Endothelial cell of umbilical vein (primary cell): ENCODE measurements at regions of chr7 and their contacts with region 1.

Region 1: DNA sequence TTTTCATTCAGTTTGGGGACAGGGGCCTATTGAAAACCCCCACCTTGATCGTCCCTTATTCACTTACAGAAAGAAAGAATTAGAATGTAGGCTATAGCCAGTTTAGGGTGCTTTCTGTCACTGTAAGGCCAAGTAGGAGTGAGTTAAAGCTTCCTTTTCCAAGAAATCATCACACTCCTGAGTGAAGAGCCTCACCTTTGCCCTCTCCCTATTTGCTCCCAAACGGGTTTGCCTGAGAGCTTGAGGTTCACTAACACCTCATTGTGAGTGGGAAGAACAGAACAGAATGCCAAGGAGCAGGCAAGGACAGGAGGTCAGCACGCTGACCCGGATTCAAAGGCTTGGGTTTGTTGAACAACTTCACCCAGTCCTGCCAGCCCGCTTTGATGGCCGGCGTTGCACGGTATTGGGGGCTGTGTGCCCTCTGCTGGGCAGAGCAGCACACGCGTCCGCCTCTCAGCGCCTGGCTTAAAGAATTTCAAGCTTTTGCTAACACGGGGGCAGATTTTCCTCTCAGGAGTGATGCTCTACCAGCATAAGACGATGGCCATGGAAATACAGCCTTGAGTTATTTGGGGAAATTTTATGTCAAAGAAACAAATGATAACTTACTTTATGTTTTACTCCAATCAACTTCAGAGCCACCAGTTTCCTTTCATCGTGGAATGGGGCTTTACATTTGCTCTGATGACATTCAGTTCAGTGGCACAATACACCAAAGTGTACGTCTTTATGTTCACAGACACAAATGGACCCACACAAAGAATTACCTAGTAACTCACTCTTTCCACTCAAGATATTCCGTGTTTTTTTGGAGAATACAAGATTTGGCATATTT is 470.0 kb downstream of the SUGCT start:
- DNase-seq: peak; percentile 65
- H3K4me3 ChIP-seq: no peak overlapping the region
- H3K27ac ChIP-seq: no peak overlapping the region
- H3K4me1 ChIP-seq: no peaks in the 10 kb centered on the region
- H3K27me3 ChIP-seq: no peaks in the 10 kb centered on the region
- CTCF ChIP-seq: peak; percentile 92 to 96
- POLR2A ChIP-seq: no peak

Region 2: DNA sequence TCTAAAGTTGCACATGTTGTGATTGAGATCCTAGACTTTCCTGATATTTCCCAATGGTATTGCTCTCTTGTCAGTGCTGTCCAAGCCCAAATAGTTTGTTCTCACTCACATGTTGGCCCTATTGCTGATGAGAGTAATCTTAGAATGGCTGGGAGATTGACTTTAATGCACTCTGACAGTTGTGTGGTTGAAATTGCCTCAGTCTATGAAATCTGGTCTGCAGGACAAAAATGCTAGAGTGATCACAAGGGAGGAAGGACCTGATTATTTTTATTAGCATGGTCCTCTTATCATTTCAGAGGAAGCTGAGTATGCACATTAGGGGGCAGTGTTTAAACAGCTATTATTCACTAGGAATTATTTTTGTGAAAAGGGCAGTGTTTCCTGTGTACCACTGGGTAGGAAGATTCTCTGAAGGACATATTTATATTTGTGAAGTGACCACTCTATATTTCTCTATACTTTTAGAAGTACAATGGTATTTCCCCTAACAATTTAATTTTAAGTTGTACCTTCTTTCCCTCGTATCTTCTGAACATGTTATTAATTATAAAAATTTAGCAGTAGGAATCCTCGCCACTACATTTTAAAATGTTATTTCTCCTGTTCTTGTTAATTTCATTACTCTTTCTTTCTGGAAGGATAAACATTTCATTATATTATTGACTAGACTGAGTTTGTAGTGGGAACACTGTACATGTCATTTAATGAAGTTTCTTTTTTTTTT is 405.6 kb before region 1 on chr7:
- CTCF ChIA-PET with region 1: interaction called, 15 read pairs
- POLR2A ChIA-PET with region 1: no interaction called
- dilution Hi-C with region 1: no loop called
- intact Hi-C with region 1: loop called (anchors 1 kb)
- DNase-seq: peak; percentile 51
- H3K4me3 ChIP-seq: no peak overlapping the region
- H3K27ac ChIP-seq: no peak overlapping the region
- H3K4me1 ChIP-seq: peaks cover 2% of the 10 kb centered on the region
- H3K27me3 ChIP-seq: no peaks in the 10 kb centered on the region
- CTCF ChIP-seq: peak; percentile 22 to 28
- POLR2A ChIP-seq: no peak

Region 3: DNA sequence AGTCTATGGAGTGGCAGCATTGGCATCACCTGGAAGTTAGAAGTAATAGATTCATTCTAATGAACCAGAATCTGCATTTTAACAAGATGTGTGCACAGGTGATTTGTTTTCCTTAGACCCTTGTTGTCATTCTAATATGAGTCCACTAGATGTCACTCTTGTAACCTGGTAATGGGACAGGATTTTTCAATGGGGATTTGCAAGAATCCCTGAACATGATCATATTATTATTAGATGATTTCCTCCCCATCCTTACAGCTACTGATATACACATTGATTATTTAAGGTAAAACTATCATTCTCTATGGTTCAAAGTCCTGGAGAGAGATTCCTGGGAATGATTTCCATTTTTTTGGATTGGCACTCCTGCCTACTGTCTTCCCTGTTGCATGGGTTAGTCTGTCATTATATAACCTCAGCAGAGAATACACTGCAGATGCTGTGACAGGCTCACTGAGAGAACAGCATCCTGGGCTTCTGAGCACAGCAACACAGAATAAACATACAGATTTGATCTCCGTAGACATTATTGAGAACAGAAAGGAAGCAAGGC is 275.1 kb before region 1 on chr7:
- CTCF ChIA-PET with region 1: interaction called, 87 read pairs
- POLR2A ChIA-PET with region 1: no interaction called
- dilution Hi-C with region 1: no loop called
- intact Hi-C with region 1: loop called (anchors 1 kb)
- DNase-seq: peak; percentile 72
- H3K4me3 ChIP-seq: no peak overlapping the region
- H3K27ac ChIP-seq: no peak overlapping the region
- H3K4me1 ChIP-seq: peaks cover 2% of the 10 kb centered on the region
- H3K27me3 ChIP-seq: no peaks in the 10 kb centered on the region
- CTCF ChIP-seq: peak; percentile 42 to 47
- POLR2A ChIP-seq: no peak

Region 4: DNA sequence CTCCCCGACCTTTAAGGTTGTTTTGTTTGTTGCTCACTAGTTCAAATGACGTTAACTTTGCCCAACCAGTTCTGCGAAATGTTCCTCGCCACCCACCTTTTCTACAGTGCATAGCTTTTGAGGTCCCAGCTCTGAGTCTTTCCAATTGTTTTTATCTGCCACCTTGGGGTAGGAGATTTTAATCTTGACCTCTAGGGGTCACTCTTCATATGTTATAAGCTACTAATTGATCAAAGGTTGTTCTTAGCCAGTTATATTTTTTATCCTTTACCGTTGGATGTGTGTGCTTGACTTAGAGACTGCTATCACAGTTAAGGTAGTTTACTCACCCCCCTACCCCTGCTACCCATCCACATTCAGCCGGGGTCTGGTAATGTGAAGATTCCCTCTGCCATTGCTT is 97.7 kb before region 1 on chr7:
- CTCF ChIA-PET with region 1: interaction called, 29 read pairs
- POLR2A ChIA-PET with region 1: no interaction called
- dilution Hi-C with region 1: no loop called
- intact Hi-C with region 1: loop called (anchors 1 kb)
- DNase-seq: no peak
- H3K4me3 ChIP-seq: no peak overlapping the region
- H3K27ac ChIP-seq: no peak overlapping the region
- H3K4me1 ChIP-seq: no peaks in the 10 kb centered on the region
- H3K27me3 ChIP-seq: no peaks in the 10 kb centered on the region
- CTCF ChIP-seq: peak in 1 of 2 donors; percentile 19
- POLR2A ChIP-seq: no peak

Region 5: GRCh38 chr7:40622941-40623501 is 18.2 kb after region 1 on chr7:
- CTCF ChIA-PET with region 1: interaction called, 14 read pairs
- POLR2A ChIA-PET with region 1: no interaction called
- dilution Hi-C with region 1: no loop called
- intact Hi-C with region 1: no loop called
- DNase-seq: no peak
- H3K4me3 ChIP-seq: no peak overlapping the region
- H3K27ac ChIP-seq: no peak overlapping the region
- H3K4me1 ChIP-seq: no peaks in the 10 kb centered on the region
- H3K27me3 ChIP-seq: no peaks in the 10 kb centered on the region
- CTCF ChIP-seq: no peak
- POLR2A ChIP-seq: no peak

Region 6: DNA sequence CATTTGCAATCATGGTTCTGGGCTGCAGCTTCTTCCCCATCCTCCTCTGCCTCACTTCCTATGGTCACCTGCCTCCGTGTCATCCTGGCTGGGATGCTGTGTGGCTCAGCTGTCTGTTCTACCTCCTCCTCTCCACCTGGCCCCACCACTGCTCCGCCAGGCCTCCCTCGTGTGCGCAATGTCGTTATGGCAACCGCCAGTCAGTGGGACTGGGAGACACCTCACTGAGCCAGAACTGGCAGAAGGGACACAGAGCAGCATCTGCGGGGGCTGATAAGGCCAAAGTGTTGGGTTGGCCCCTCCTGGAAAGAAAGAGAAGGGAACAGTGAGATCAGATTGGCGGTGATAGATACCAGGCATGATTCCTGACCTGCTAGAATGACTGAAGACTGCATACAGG is 570.6 kb after region 1 on chr7:
- CTCF ChIA-PET with region 1: no interaction called
- POLR2A ChIA-PET with region 1: no interaction called
- dilution Hi-C with region 1: no loop called
- intact Hi-C with region 1: no loop called
- DNase-seq: no peak
- H3K4me3 ChIP-seq: no peak overlapping the region
- H3K27ac ChIP-seq: no peak overlapping the region
- H3K4me1 ChIP-seq: no peaks in the 10 kb centered on the region
- H3K27me3 ChIP-seq: no peaks in the 10 kb centered on the region
- CTCF ChIP-seq: no peak
- POLR2A ChIP-seq: no peak

Region 7: GRCh38 chr7:41731492-41732435 is 1126.9 kb after region 1 on chr7:
- CTCF ChIA-PET with region 1: interaction called, 6 read pairs
- POLR2A ChIA-PET with region 1: no interaction called
- dilution Hi-C with region 1: no loop called
- intact Hi-C with region 1: loop called (anchors 2 kb)
- DNase-seq: peak; percentile 33
- H3K4me3 ChIP-seq: no peak overlapping the region
- H3K27ac ChIP-seq: no peak overlapping the region
- H3K4me1 ChIP-seq: no peaks in the 10 kb centered on the region
- H3K27me3 ChIP-seq: peaks cover 3 to 4% of the 10 kb centered on the region in 2 experiments
- CTCF ChIP-seq: peak; percentile 5 to 8
- POLR2A ChIP-seq: no peak